Activated B cell treated with CpG ODN at 0.5 μM for 24 hours (primary cell): ENCODE measurements at regions of chr16 and their contacts with region 1.

Region 1: DNA sequence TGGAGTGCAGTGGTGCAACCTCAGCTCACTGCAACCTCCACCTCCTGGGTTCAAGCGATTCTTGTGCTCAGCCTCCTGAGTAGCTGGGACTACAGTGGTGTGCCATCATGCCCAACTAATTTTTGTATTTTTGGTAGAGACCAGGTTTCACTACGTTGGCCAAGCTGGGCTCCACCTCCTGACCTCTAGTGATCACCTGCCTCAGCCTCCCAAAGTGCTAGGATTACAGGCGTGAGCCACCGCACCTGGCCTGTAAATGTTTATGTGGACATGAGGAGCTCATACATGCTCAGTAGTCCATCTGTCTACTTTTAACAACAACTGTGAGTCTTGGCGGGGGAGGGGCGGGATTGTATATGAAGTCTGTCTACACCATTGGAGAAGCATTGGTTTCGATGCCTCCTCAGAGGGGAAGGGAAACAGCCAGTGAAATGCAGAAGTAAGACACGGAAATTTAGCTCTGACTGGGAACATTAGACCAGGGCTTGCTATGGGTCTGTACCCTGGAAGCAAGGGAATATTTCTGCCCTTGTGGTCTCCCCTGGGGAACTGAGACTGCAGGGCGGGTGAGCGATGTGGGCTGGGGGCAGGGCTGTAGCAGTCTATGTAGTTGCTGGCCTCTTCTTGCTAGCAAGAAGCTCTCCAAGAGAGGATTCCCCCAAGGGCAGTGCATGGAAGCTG is 9.3 kb downstream of the NUBP1 start:
- DNase-seq: peak; percentile 53
- ATAC-seq: peak; percentile 86
- H3K4me3 Mint-ChIP-seq: peak overlapping the region; percentile 63
- H3K27ac Mint-ChIP-seq: peak overlapping the region; percentile 77
- H3K4me1 Mint-ChIP-seq: peaks cover 61% of the 10 kb centered on the region
- H3K27me3 Mint-ChIP-seq: no peaks in the 10 kb centered on the region
- CTCF ChIP-seq: no peak

Region 2: GRCh38 chr16:10765772-10766171 is 12.8 kb after region 1 on chr16:
- CTCF ChIA-PET with region 1: interaction called, 3 read pairs
- POLR2A ChIA-PET with region 1: interaction called, 19 read pairs
- intact Hi-C with region 1: loop called (anchors 1 kb)
- DNase-seq: peak; percentile 57
- ATAC-seq: peak; percentile 97
- H3K4me3 Mint-ChIP-seq: peak overlapping the region; percentile 56
- H3K27ac Mint-ChIP-seq: peak overlapping the region; percentile 84
- H3K4me1 Mint-ChIP-seq: peaks cover 44% of the 10 kb centered on the region
- H3K27me3 Mint-ChIP-seq: no peaks in the 10 kb centered on the region
- CTCF ChIP-seq: no peak

Region 3: DNA sequence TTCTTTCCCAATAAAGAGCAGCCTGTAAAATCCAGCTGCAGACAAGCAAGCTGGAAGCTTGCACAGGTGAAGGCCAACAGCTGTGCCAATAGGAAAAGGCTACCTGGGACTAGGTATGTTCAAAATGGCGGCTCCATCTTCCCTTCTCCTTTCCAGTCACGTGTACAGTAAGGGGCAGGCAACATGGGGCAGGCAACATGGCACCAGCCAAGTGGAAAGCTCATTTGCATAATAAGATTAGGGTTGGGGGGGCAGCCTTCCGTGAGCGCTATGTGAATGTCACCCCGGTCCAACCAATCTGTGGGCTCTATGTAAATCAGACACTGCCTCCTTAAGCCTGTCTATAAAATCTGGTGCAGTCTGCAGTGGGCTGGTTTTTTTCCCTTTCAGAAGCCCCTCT is 34.3 kb after region 1 on chr16:
- CTCF ChIA-PET with region 1: no interaction called
- POLR2A ChIA-PET with region 1: interaction called, 3 read pairs
- intact Hi-C with region 1: loop called (anchors 5 kb)
- DNase-seq: peak; percentile 29
- ATAC-seq: peak; percentile 92
- H3K4me3 Mint-ChIP-seq: no peak overlapping the region
- H3K27ac Mint-ChIP-seq: peak overlapping the region; percentile 44
- H3K4me1 Mint-ChIP-seq: peaks cover 52% of the 10 kb centered on the region
- H3K27me3 Mint-ChIP-seq: no peaks in the 10 kb centered on the region
- CTCF ChIP-seq: no peak

Region 4: DNA sequence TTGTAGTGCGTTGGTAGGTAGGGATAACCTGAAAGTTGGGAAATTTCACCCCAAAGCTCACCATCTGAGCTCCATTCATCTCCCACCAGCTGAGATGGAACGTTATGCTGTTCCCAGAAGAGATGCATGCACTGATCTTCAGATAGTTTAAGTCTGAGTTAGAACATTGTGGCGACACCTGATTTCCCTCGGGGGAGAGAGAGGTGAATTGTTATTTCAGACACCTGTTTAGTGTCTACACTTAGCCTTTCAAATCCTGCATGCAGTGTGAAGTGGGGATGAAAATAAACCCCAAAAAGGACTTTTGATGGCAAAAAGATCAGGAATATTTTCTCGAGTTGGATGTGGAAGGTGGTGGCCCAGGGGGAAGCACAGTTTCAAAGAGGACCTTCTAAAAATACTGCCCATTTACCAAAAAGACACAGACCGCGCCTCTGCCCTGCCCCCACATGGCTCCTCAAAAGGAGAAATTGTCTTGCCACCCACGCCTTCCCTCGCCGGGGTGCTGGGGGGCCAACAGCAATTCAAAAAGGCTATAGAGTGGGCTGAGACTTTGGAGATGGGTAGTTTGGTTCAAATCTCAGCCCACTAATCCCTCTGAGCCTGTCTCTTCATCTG is 135.4 kb after region 1 on chr16:
- CTCF ChIA-PET with region 1: no interaction called
- POLR2A ChIA-PET with region 1: interaction called, 16 read pairs
- intact Hi-C with region 1: no loop called
- DNase-seq: no peak
- ATAC-seq: peak; percentile 6
- H3K4me3 Mint-ChIP-seq: peak overlapping the region; percentile 82
- H3K27ac Mint-ChIP-seq: peak overlapping the region; percentile 87
- H3K4me1 Mint-ChIP-seq: peaks cover 99% of the 10 kb centered on the region
- H3K27me3 Mint-ChIP-seq: no peaks in the 10 kb centered on the region
- CTCF ChIP-seq: no peak

Region 5: GRCh38 chr16:11105038-11105903 is 352.3 kb after region 1 on chr16:
- CTCF ChIA-PET with region 1: no interaction called
- POLR2A ChIA-PET with region 1: no interaction called
- intact Hi-C with region 1: no loop called
- DNase-seq: no peak
- ATAC-seq: peak; percentile 87
- H3K4me3 Mint-ChIP-seq: peak overlapping the region; percentile 72
- H3K27ac Mint-ChIP-seq: peak overlapping the region; percentile 92
- H3K4me1 Mint-ChIP-seq: peaks cover 45% of the 10 kb centered on the region
- H3K27me3 Mint-ChIP-seq: no peaks in the 10 kb centered on the region
- CTCF ChIP-seq: no peak